ENCODE measurements at regions of chr2 and their contacts with region 1.

Region 1: GRCh38 chr2:200713003-200713703 is 98.6 kb upstream of the BZW1 start:
- DNase-seq: peak; percentile 78 to 96
- ATAC-seq: peak; percentile 97 to 98
- H3K4me3 ChIP-seq: peak overlapping the region; percentile 33
- H3K27ac ChIP-seq: peak overlapping the region; percentile 85 to 91
- H3K4me1 ChIP-seq: peaks cover 22% of the 10 kb centered on the region
- CTCF ChIP-seq: peak; percentile 96
- EP300 ChIP-seq: peak; percentile 34 to 40; a peak in 2 of 5 replicates
- POLR2A ChIP-seq: peak; percentile 53
- RAD21 ChIP-seq: peak; percentile 99

Region 2: DNA sequence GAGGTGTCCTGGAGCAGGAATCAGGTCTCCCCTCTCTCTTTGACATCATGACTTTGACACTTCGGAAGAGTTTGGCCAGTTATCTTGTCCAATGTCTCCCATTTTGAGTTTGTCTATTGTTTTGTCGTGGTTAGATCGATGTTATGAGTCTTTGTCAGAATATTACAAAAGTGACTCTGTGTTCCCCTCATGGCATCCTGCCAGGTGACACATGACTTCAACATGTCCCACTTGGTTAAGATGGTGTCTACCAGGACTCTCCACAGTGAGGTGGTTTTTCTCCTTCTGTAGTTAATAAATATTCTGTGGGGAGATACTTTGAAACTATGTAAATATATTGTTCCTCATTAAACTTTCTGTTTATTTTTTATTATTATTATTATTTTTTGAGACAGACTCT is 21.9 kb after region 1 on chr2:
- CTCF ChIA-PET with region 1: interaction called, 116 read pairs
- POLR2A ChIA-PET with region 1: interaction called, 7 read pairs
- DNase-seq: no peak
- ATAC-seq: no peak
- H3K4me3 ChIP-seq: no peak overlapping the region
- H3K27ac ChIP-seq: peak overlapping the region in 1 of 2 experiments; percentile 36; a peak in 1 of 6 replicates
- H3K4me1 ChIP-seq: peaks cover 4% of the 10 kb centered on the region; the same call in 1 of the 3 replicates
- CTCF ChIP-seq: no peak
- EP300 ChIP-seq: no peak
- POLR2A ChIP-seq: no peak
- RAD21 ChIP-seq: no peak

Region 3: GRCh38 chr2:200747668-200748618 is 34.8 kb after region 1 on chr2:
- CTCF ChIA-PET with region 1: interaction called, 44 read pairs
- POLR2A ChIA-PET with region 1: interaction called, 8 read pairs
- DNase-seq: peak; percentile 37 to 94
- ATAC-seq: peak; percentile 80 to 93
- H3K4me3 ChIP-seq: no peak overlapping the region
- H3K27ac ChIP-seq: peak overlapping the region; percentile 85 to 88
- H3K4me1 ChIP-seq: peaks cover 40% of the 10 kb centered on the region
- CTCF ChIP-seq: no peak
- EP300 ChIP-seq: peak; percentile 64 to 78; a peak in 2 of 5 replicates
- POLR2A ChIP-seq: no peak
- RAD21 ChIP-seq: peak; percentile 20 to 46; a peak in 4 of 5 replicates

Region 4: DNA sequence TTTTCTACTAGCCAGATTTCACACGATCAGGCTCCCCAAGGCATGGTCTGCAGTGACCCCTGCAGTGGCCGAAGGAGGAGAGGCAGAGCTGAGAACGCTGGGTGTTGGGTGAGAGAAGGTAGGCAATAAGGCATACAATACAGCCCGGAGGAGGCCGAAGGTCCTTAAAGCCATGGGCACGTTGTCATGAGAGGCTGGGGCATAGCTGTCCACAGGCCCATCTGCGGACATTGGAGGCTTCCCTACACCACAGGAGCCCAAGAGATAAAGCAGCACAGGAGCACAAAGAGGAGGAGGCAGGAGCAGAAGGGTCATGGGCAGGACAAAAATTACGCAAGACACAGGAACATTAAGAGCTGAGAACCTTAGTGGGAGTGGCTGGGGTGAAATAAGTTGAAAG is 81.9 kb after region 1 on chr2:
- CTCF ChIA-PET with region 1: interaction called, 13 read pairs
- POLR2A ChIA-PET with region 1: no interaction called
- DNase-seq: peak in 1 of 2 experiments; percentile 49
- ATAC-seq: peak; percentile 71 to 83; a peak in 5 of 6 replicates
- H3K4me3 ChIP-seq: no peak overlapping the region
- H3K27ac ChIP-seq: peak overlapping the region; percentile 38 to 86
- H3K4me1 ChIP-seq: peaks cover 41% of the 10 kb centered on the region
- CTCF ChIP-seq: peak; percentile 20; the same call in 2 of the 3 replicates
- EP300 ChIP-seq: no peak
- POLR2A ChIP-seq: no peak
- RAD21 ChIP-seq: peak; percentile 51 to 63; a peak in 4 of 5 replicates

Region 5: GRCh38 chr2:200820573-200821234 is 107.6 kb after region 1 on chr2:
- CTCF ChIA-PET with region 1: interaction called, 13 read pairs
- POLR2A ChIA-PET with region 1: no interaction called
- DNase-seq: no peak
- ATAC-seq: peak in 1 of 2 experiments; percentile 21; a peak in 3 of 6 replicates
- H3K4me3 ChIP-seq: no peak overlapping the region
- H3K27ac ChIP-seq: no peak overlapping the region
- H3K4me1 ChIP-seq: peaks cover under 1% of the 10 kb centered on the region; the same call in 1 of the 3 replicates
- CTCF ChIP-seq: no peak
- EP300 ChIP-seq: no peak
- POLR2A ChIP-seq: no peak
- RAD21 ChIP-seq: no peak

Region 6: GRCh38 chr2:200864176-200864976 is 151.2 kb after region 1 on chr2 and contains the start of gene CLK1:
- CTCF ChIA-PET with region 1: interaction called, 12 read pairs
- POLR2A ChIA-PET with region 1: interaction called, 19 read pairs
- DNase-seq: peak; percentile 80 to 92
- ATAC-seq: peak; percentile 90
- H3K4me3 ChIP-seq: peak within 1 kb of the TSS; percentile 77
- H3K27ac ChIP-seq: peak within 1 kb of the TSS; percentile 91 to 97
- H3K4me1 ChIP-seq: peaks cover 38% of the 10 kb centered on the region
- CTCF ChIP-seq: no peak
- EP300 ChIP-seq: no peak
- POLR2A ChIP-seq: peak; percentile 93
- RAD21 ChIP-seq: no peak
- polyA plus RNA-seq, gene CLK1: 85.4 and 88.3 TPM in 2 replicates

Region 7: GRCh38 chr2:201572846-201573508 is 859.8 kb after region 1 on chr2:
- CTCF ChIA-PET with region 1: no interaction called
- POLR2A ChIA-PET with region 1: no interaction called
- DNase-seq: no peak
- ATAC-seq: no peak
- H3K4me3 ChIP-seq: no peak overlapping the region
- H3K27ac ChIP-seq: no peak overlapping the region
- H3K4me1 ChIP-seq: no peaks in the 10 kb centered on the region
- CTCF ChIP-seq: no peak
- EP300 ChIP-seq: no peak
- POLR2A ChIP-seq: no peak
- RAD21 ChIP-seq: no peak

Measured in A549 (cell line).